ENCODE measurements at regions of chr18 and their contacts with region 1.

Region 1: DNA sequence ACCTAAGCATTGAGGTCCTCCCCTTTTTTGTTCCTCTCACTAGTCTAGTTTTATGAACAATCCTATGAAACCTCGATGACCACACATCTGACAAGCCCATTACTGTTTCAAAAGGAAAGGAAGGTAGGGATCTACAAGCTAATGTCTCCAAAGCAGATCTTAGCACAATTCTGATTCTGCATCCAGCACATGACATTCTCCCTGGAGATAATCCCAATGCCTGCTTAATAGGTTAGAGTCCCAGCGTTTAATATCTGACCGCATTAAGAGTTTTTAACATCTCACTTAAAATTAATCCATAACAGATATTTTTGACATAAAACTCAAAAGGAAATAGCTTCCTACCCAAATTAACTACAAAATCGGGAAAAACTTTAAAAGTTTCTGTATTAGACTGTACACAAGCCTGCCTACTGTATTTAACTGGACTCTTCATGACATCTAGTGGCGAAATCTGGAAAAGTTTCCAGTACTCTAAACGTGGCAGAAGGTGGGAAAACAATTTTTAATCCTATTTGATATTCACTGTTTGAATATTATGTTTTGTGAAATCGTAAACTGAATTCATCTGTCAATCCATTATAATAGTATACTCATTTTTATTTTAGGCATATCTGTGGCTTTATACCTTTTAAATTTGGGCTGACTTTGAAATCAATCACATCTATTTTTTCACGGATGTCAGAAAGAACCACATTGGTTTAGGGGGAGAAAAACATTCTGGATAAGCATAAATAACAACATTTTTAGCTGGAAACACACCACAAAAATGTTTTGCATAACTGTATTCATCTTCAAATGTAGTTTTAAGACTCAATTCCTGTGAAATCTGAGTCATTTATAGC is 62.4 kb downstream of the TXNL1 start:
- DNase-seq: no peak

Region 2: GRCh38 chr18:55234366-55235093 is 1341.5 kb before region 1 on chr18:
- intact Hi-C with region 1: loop called in 1 of 2 experiments (anchors 10 kb)
- DNase-seq: peak; percentile 87

Region 3: DNA sequence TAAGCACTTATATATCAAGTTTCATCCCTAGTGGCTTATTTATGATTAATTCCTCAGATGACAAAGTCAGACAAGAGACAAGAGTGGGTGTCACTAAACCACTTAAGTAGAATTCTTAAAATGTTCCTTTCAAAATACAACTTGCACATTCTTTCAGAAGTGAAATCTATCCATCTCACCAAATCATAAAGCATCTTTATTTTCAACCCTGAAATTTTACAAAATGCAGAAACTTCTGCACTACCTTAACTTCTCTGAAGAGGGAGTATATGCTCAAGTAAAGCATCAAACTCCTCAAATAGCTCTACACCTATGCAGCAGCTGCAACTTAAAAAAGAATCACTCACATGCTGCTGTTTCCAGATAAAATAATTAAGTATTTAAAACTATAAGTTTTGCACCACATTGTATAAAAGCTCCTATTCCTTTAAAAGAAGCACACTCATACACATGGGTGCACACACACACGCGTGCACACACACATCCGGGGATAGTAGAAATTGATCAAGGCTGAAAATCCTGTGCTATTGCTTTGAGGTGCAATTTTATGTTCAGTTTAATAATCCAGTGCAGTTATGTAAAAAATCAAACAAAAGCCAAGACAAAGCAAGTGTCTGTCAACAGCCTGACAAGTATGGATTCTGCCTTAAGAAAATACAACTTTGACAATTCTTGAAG is 1232.5 kb before region 1 on chr18:
- intact Hi-C with region 1: loop called in 1 of 2 experiments (anchors 10 kb)
- DNase-seq: no peak

Region 4: GRCh38 chr18:55415258-55415871 is 1160.7 kb before region 1 on chr18:
- intact Hi-C with region 1: loop called in 1 of 2 experiments (anchors 5 kb)
- DNase-seq: peak; percentile 96

Measured in posterior vena cava (tissue), 2 donors.